Prostate gland (tissue), 2 donors: ENCODE measurements at regions of chr19 and their contacts with region 1.

Region 1: DNA sequence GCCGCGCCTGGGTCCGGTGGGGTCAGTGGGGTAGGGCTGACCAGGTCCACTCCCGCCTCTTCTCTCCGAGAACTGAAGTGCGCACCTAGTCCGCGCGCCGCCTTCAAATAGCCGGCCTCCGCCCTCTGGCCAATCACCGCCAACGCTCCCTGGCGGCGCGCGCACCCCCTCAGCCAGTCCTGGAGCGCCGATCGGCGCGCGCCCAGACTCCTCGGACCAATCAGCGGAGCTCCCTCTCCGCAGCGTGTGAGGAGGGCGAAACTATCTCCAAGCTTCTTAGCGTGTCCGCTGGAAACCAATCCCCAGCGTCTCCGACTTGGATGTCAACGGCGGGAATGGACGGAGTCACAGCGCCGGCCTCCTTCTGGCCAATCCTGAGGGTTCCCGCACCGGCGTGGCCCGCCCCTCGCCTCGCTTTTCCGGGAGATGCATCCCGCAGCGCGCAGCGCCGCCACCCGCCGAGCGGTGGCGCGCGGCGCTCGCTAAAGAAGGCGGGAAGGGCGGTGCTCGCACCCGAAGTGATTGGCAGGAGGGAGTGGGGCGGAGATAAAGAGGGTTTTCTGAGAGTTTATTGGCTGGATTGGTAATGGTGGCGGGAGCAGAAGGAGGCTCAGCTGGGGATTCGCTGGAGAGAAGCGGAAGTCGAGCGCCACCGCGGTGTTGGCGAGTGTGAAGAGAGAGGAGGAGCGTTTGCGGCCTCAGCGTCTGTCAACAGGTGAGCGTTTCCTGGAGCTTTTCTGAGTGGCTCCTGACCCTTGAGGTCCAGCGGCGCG is at the start of gene ASF1B:
- DNase-seq: peak; percentile 99
- H3K4me3 ChIP-seq: peak within 1 kb of the TSS; percentile 60 to 77
- H3K27ac ChIP-seq: peak within 1 kb of the TSS; percentile 93 to 98
- H3K4me1 ChIP-seq: peaks cover 11% of the 10 kb centered on the region
- H3K27me3 ChIP-seq: no peaks in the 10 kb centered on the region
- CTCF ChIP-seq: peak; percentile 91 to 100 (median 96)
- POLR2A ChIP-seq: peak; percentile 87
- total RNA-seq, gene ASF1B: 5.1 to 19.7 TPM

Region 2: DNA sequence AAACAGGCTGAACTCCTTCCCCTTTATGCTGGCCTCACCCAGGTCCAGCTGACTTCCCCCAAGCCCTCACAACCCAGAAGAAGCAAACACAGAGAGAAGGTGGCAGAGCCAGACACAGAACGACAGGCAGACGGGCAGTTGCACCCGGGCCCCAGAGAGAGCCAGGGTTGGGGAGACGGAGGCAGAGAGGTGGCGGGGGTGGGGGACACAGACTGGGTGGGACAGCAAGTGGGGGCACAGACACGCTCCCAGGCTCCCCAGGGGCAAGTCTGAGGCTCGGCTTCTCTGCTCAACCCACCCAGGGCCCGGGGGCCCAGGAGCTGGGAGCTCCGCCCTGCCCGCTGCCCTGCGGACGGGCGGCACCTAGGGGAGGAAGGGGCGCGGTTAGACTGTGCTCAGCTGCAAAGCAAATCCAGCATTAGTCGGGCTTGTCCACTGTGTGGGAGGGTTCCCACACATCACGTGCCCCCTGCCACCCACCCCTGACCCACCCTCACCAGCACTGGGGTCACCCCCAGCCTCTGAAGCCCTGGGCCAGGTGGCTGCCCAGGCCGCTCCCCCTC is 31.0 kb after region 1 on chr19:
- intact Hi-C with region 1: no loop called
- DNase-seq: no peak
- H3K4me3 ChIP-seq: no peak overlapping the region
- H3K27ac ChIP-seq: no peak overlapping the region
- H3K4me1 ChIP-seq: no peaks in the 10 kb centered on the region
- H3K27me3 ChIP-seq: no peaks in the 10 kb centered on the region
- CTCF ChIP-seq: no peak
- POLR2A ChIP-seq: no peak

Region 3: GRCh38 chr19:14517840-14518505 is 381.3 kb after region 1 on chr19 and contains the start of gene DNAJB1:
- intact Hi-C with region 1: loop called (anchors 5 kb)
- DNase-seq: peak; percentile 83
- H3K4me3 ChIP-seq: peak within 1 kb of the TSS; percentile 85 to 98
- H3K27ac ChIP-seq: peak within 1 kb of the TSS; percentile 100
- H3K4me1 ChIP-seq: peaks cover 9% of the 10 kb centered on the region
- H3K27me3 ChIP-seq: no peaks in the 10 kb centered on the region
- CTCF ChIP-seq: no peak
- POLR2A ChIP-seq: peak; percentile 91
- total RNA-seq, gene DNAJB1: 91.6 to 108 TPM